Activated B cell treated with CpG ODN at 0.5 μM for 24 hours (primary cell): ENCODE measurements at regions of chr6 and their contacts with region 1.

Region 1: GRCh38 chr6:134317471-134318131 is at the start of gene SGK1:
- DNase-seq: peak; percentile 22
- ATAC-seq: peak; percentile 49
- H3K4me3 Mint-ChIP-seq: peak within 1 kb of the TSS; percentile 75
- H3K27ac Mint-ChIP-seq: no peak within 1 kb of the TSS
- H3K4me1 Mint-ChIP-seq: peaks cover 13% of the 10 kb centered on the region
- H3K27me3 Mint-ChIP-seq: peaks cover 18% of the 10 kb centered on the region
- CTCF ChIP-seq: no peak
- total RNA-seq, gene SGK1: 32.8 and 36.2 TPM in 2 replicates

Region 2: GRCh38 chr6:133526436-133526835 is 791.2 kb before region 1 on chr6:
- CTCF ChIA-PET with region 1: no interaction called
- POLR2A ChIA-PET with region 1: no interaction called
- intact Hi-C with region 1: no loop called
- DNase-seq: no peak
- ATAC-seq: no peak
- H3K4me3 Mint-ChIP-seq: no peak overlapping the region
- H3K27ac Mint-ChIP-seq: no peak overlapping the region
- H3K4me1 Mint-ChIP-seq: no peaks in the 10 kb centered on the region
- H3K27me3 Mint-ChIP-seq: no peaks in the 10 kb centered on the region
- CTCF ChIP-seq: no peak

Region 3: GRCh38 chr6:133817460-133818047 is 500.0 kb before region 1 on chr6:
- CTCF ChIA-PET with region 1: no interaction called
- POLR2A ChIA-PET with region 1: no interaction called
- intact Hi-C with region 1: no loop called
- DNase-seq: peak; percentile 21
- ATAC-seq: no peak
- H3K4me3 Mint-ChIP-seq: no peak overlapping the region
- H3K27ac Mint-ChIP-seq: no peak overlapping the region
- H3K4me1 Mint-ChIP-seq: no peaks in the 10 kb centered on the region
- H3K27me3 Mint-ChIP-seq: peaks cover 6% of the 10 kb centered on the region
- CTCF ChIP-seq: peak; percentile 62

Region 4: DNA sequence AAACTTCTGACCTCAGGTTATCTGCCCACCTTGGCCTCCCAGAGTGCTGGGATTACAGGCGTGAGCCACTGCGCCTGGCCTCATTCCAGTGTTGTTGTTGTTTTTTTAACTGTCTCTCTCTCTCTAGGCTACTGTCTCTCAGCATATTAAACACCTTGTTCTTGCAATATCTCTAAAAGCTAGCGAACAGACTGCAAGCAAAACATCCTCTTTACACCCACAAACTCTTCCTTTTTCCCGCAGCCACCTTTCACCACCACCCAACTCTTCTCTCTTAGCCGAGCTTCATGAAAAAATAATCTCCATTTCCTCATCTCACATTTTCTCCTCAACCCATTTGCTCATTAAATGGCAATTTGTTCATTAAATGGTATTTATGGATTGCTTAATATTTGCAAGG is 45.2 kb before region 1 on chr6:
- CTCF ChIA-PET with region 1: no interaction called
- POLR2A ChIA-PET with region 1: interaction called, 10 read pairs
- intact Hi-C with region 1: no loop called
- DNase-seq: no peak
- ATAC-seq: no peak
- H3K4me3 Mint-ChIP-seq: no peak overlapping the region
- H3K27ac Mint-ChIP-seq: no peak overlapping the region
- H3K4me1 Mint-ChIP-seq: peaks cover 6% of the 10 kb centered on the region
- H3K27me3 Mint-ChIP-seq: no peaks in the 10 kb centered on the region
- CTCF ChIP-seq: no peak

Region 5: DNA sequence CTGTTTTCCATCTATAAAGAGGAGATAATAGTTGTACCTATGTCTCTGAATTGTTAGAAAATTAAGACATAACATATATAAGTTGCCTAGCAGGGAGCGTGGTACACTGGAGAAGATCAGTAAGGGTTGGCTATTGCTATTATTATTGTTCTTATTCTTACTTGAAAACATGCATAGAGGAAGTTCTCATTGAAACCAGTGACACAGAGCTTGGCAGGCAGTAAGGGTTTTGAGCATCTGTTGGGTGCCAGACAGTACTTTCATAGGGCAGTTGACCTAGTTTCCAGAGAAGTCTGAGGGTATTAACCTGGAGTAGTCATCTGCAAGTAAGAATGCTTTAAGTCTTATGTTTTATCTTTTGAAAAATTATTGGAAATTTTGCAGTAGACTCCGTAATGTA is 13.7 kb after region 1 on chr6:
- CTCF ChIA-PET with region 1: no interaction called
- POLR2A ChIA-PET with region 1: no interaction called
- intact Hi-C with region 1: loop called (anchors 2 kb)
- DNase-seq: no peak
- ATAC-seq: no peak
- H3K4me3 Mint-ChIP-seq: no peak overlapping the region
- H3K27ac Mint-ChIP-seq: no peak overlapping the region
- H3K4me1 Mint-ChIP-seq: no peaks in the 10 kb centered on the region
- H3K27me3 Mint-ChIP-seq: no peaks in the 10 kb centered on the region
- CTCF ChIP-seq: no peak